A673 (cell line): ENCODE measurements at regions of chr2 and their contacts with region 1.

Region 1: DNA sequence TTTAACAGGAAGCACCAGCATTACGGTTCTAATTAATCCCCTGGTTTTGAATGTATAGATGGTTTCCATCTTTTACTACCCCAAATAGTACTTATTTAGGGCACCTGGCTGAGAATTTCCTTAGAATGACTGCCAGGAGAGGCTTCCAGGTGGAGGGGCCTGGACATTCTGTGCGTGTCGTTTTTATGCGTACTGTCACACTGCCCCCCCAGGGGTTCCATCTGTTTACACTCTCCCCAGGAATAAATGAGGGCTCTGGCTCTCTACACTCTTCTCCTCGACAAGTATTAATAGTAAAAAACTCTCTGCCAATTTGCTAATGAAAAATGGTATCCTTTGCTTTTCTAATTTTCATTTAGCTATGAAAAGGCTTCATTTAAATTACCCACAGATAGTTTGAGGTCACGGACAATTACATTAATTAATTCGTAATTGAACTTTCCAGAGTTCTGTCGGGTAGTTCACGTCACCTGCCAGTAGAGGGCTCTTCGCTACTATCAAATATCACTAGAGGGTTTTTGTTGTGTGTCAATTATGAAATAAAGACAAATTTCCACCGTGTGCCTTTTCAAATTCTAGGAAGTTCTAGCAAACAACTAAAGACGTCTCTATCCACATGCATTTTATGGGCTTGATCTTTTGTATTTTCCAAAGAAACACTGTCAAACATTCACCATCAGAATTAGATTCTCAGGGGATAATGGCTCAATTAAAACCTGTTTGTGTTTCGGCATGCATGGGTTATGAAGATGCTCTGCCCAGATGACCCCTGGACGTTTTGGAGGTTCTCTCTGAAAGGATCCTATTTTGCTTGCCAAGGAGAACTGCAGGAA is 88.8 kb upstream of the ASB18 start:
- DNase-seq: peak; percentile 36
- H3K4me3 ChIP-seq: no peak overlapping the region
- H3K27ac ChIP-seq: no peak overlapping the region
- H3K4me1 ChIP-seq: no peaks in the 10 kb centered on the region
- H3K27me3 ChIP-seq: peaks cover 28% of the 10 kb centered on the region
- CTCF ChIP-seq: peak; percentile 95

Region 2: DNA sequence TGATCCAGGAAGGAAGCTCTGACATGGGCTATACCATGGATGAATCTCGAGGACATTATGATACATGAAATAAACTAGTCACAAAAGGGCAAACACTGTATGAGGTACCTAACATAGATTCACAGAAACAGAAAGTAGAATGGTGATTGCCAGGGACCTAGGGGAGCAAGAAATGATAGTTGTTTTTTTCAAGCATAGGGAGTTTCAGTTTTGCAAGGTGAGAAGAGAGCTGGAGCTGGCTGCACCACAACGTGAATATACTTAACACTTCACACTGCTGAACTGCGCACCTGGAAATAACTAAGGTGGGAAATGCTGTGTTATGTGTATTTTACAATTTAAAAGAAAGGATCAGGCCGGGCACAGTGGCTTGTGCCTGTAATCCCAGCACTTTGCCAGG is 872.4 kb before region 1 on chr2:
- CTCF ChIA-PET with region 1: no interaction called
- POLR2A ChIA-PET with region 1: no interaction called
- intact Hi-C with region 1: no loop called
- DNase-seq: no peak
- H3K4me3 ChIP-seq: no peak overlapping the region
- H3K27ac ChIP-seq: no peak overlapping the region
- H3K4me1 ChIP-seq: no peaks in the 10 kb centered on the region
- H3K27me3 ChIP-seq: no peaks in the 10 kb centered on the region
- CTCF ChIP-seq: no peak

Region 3: DNA sequence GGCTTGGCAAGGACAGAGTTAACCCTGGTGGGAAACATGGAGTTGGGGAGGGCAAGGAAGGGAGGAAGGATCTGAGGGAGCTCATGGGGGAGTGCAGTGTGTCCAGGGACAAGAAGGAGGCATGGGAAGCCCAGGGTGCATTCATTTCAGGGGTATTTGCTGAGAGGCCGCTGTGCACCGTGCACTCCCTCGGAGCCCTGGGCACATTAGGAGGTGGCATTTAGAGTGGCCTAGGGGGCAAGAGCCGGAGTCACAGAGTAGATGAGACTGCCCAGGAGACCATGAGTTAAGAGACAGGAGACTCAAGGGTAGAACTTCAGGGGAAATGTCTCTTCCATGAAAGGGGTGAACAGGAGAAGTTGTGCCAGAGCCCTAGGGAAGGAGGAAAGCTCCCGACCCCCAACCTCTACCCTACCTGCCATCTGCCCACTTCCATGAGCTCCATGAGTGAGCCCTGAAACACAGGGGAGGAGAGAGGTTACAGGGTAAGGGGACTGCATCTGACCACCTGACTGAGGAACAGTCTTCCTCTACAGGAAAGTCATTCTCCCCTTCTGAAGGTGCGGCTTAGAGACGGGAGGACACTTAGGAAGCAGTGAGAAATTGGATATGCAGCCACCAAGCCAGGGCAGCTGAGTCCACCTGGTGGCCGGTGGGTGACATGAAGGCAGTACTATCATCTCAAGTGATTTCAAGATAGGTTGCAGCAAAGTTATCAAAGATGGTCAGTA is 674.2 kb after region 1 on chr2:
- CTCF ChIA-PET with region 1: no interaction called
- POLR2A ChIA-PET with region 1: no interaction called
- intact Hi-C with region 1: loop called (anchors 1 kb)
- DNase-seq: peak; percentile 58
- H3K4me3 ChIP-seq: no peak overlapping the region
- H3K27ac ChIP-seq: no peak overlapping the region
- H3K4me1 ChIP-seq: no peaks in the 10 kb centered on the region
- H3K27me3 ChIP-seq: peaks cover 34% of the 10 kb centered on the region
- CTCF ChIP-seq: peak; percentile 76

Region 4: DNA sequence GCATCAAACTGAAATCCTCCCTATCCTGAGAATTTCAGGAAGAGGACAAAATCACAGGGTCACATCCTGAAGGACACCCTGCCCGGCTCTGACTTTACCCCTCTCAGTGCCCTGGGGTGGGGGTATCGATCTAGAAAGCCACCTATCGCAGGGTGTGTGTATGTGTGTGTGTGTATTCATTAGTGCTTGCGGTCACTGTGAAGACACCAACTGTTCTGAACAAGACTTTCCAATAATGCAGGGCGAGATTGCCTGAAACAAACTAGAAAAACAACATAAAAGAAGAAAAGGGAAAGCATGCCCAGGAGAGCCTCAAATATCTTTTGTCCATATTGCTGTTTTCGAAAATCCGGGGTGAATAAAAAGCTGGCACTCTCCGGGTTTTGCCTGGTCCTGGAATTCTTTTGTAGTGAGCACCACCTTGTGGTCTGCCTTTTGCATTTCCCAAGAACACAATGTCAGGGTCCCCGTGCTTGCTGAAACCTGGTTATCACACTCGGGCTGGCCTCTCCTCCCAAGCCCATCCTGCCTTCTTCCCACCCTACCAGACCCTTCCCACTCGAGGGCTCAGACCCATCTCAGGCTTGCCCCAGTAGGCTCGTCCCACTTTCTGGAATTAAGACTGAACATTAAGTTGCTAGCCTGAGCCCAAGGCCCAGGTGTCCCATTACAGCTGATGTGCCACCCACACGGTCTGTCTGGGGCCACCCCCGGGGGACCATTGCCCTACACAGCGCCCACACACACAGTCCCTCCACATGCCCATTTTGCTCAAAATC is 707.7 kb after region 1 on chr2:
- CTCF ChIA-PET with region 1: no interaction called
- POLR2A ChIA-PET with region 1: no interaction called
- intact Hi-C with region 1: loop called (anchors 1 kb)
- DNase-seq: peak; percentile 67
- H3K4me3 ChIP-seq: no peak overlapping the region
- H3K27ac ChIP-seq: no peak overlapping the region
- H3K4me1 ChIP-seq: no peaks in the 10 kb centered on the region
- H3K27me3 ChIP-seq: no peaks in the 10 kb centered on the region
- CTCF ChIP-seq: peak; percentile 67

Region 5: DNA sequence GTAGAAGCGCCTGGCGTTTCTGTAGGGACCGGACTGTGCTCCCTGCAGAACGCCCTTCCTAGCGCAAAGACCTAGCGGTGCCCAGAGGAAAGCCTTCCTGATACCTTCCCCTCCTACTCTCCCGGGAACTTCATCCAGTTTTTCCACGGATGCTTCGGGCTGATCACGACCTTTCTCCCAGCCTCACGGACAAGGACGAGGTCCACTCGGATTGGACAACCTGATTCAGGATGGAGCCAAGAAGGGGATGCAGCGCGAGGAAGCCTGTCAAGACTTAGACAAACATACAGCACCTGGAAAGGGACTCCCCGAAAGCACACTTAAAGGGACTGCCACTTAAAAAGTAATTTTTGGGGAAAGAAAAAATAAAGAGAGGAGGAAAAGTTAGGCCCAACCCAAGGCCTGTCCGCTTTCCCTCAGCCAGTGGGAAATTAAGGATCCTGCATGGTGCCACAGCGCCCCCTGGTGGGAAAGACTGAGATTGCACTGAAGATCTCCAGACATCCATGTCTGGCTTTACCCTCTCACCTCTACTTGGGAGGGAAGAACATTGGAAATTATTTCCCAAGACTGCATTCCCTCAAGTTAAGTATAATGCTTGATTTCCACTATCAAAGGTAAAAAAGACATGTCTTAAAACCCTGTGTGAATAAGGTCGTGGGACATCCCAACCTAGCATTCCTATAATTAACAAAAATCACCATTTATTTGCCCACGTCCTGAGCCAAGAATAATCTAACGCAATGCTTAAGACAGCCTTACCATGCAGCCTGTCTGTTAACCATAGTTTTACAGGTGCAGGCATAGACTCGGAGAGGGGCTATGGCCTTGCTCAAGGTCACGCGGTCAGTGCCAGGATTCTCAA is 719.3 kb after region 1 on chr2:
- CTCF ChIA-PET with region 1: no interaction called
- POLR2A ChIA-PET with region 1: no interaction called
- intact Hi-C with region 1: loop called (anchors 1 kb)
- DNase-seq: peak; percentile 75
- H3K4me3 ChIP-seq: no peak overlapping the region
- H3K27ac ChIP-seq: no peak overlapping the region
- H3K4me1 ChIP-seq: no peaks in the 10 kb centered on the region
- H3K27me3 ChIP-seq: peaks cover 4% of the 10 kb centered on the region
- CTCF ChIP-seq: peak; percentile 94